Activated naive CD4-positive, alpha-beta T cell treated with anti-CD3 and anti-CD28 coated beads for 36 hours (primary cell): ENCODE measurements at regions of chr2 and their contacts with region 1.

Region 1: DNA sequence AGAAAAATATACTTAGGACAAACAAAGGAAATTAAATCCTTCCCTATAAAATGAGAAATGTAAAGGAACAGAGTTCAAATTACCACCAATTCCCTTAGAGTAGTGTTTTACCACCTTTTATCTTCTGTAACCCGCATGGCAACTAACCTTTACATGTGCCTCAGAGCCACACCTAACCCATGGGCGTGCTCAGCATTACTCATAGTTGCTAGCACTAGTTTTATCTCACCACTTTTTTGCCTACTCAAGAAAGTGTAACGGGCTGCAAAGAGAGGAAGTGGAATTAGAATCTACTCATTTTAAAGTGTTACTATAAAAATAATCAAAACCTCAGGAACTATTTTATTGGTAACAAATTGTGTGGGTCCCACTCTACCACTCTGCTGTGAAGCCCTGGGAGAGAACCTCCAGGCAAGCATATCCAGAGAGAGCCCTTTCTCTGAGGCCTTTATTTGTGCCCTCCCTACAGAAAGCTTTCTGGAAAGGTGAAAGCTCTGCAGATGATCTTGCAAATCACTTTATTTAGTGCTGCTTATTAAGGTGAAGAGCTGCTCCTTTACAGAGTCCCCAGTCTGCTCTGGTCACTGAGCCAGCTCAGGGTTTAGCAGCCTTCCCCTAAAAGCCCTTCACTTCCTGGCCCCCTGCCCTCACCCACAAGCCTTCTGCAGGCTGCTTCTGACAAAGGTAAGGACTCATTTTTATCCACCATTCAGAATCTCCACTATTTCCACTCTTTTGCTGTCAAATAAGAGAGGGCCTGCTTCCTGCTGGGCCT is 98.8 kb downstream of the TRABD2A start:
- DNase-seq: peak; percentile 78
- H3K4me3 Mint-ChIP-seq: no peak overlapping the region
- H3K27ac Mint-ChIP-seq: peak overlapping the region; percentile 83
- H3K4me1 Mint-ChIP-seq: peaks cover 68% of the 10 kb centered on the region
- H3K27me3 Mint-ChIP-seq: no peaks in the 10 kb centered on the region

Region 2: GRCh38 chr2:84516234-84516986 is 265.7 kb before region 1 on chr2 and contains the start of gene DNAH6:
- CTCF ChIA-PET with region 1: no interaction called
- intact Hi-C with region 1: loop called (anchors 2 kb)
- DNase-seq: peak; percentile 94
- H3K4me3 Mint-ChIP-seq: peak within 1 kb of the TSS; percentile 85
- H3K27ac Mint-ChIP-seq: no peak within 1 kb of the TSS
- H3K4me1 Mint-ChIP-seq: peaks cover 22% of the 10 kb centered on the region
- H3K27me3 Mint-ChIP-seq: no peaks in the 10 kb centered on the region
- total RNA-seq, gene DNAH6: 0.07 to 0.62 TPM

Region 3: GRCh38 chr2:84741296-84741765 is 40.8 kb before region 1 on chr2:
- CTCF ChIA-PET with region 1: interaction called, 5 read pairs
- intact Hi-C with region 1: loop called (anchors 1 kb)
- DNase-seq: peak; percentile 79
- H3K4me3 Mint-ChIP-seq: no peak overlapping the region
- H3K27ac Mint-ChIP-seq: no peak overlapping the region
- H3K4me1 Mint-ChIP-seq: peaks cover 24% of the 10 kb centered on the region
- H3K27me3 Mint-ChIP-seq: no peaks in the 10 kb centered on the region

Region 4: GRCh38 chr2:84805250-84805917 is 23.3 kb after region 1 on chr2:
- CTCF ChIA-PET with region 1: no interaction called
- intact Hi-C with region 1: loop called (anchors 2 kb)
- DNase-seq: no peak
- H3K4me3 Mint-ChIP-seq: no peak overlapping the region
- H3K27ac Mint-ChIP-seq: no peak overlapping the region
- H3K4me1 Mint-ChIP-seq: peaks cover 12% of the 10 kb centered on the region
- H3K27me3 Mint-ChIP-seq: no peaks in the 10 kb centered on the region

Region 5: DNA sequence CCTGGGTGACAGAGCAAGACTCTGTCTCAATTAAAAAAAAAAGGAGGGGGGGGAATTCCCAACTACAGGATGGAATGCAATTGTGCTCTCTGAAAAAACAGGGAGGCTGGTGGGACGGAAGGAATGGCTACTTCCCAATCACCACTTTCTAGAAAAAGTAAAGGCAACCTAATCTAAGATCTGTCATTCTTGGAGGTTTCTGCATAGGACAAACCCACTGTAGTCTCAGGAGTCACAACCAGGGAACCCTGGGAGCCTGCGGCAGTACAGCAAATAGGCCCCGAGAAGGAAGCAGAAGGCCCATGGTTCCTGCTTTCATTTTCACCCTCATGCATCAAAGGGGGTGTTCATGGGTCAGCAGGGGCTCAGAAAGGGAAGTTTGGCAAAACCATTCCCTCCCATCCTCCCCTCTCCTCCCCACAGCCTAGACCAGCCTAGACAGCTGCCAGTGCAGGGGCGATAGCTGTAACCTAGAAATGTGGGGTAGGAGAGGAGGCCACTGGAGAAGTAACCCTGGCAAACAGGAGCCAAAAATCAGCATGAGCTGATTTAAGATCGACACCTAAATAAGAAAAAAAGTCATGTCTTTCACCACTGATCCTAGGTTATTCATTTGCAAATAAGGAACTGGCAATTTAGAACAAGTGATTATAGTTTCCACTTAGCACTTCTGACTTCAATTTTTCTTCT is 50.8 kb after region 1 on chr2:
- CTCF ChIA-PET with region 1: interaction called, 3 read pairs
- intact Hi-C with region 1: loop called (anchors 1 kb)
- DNase-seq: peak; percentile 52
- H3K4me3 Mint-ChIP-seq: peak overlapping the region; percentile 43
- H3K27ac Mint-ChIP-seq: peak overlapping the region; percentile 87
- H3K4me1 Mint-ChIP-seq: peaks cover 33% of the 10 kb centered on the region
- H3K27me3 Mint-ChIP-seq: no peaks in the 10 kb centered on the region

Region 6: GRCh38 chr2:85390941-85391669 is 609.0 kb after region 1 on chr2:
- CTCF ChIA-PET with region 1: no interaction called
- intact Hi-C with region 1: no loop called
- DNase-seq: peak; percentile 79
- H3K4me3 Mint-ChIP-seq: no peak overlapping the region
- H3K27ac Mint-ChIP-seq: no peak overlapping the region
- H3K4me1 Mint-ChIP-seq: peaks cover 5% of the 10 kb centered on the region
- H3K27me3 Mint-ChIP-seq: no peaks in the 10 kb centered on the region